GM18951 (cell line): ENCODE measurements at regions of chr4 and their contacts with region 1.

Region 1: DNA sequence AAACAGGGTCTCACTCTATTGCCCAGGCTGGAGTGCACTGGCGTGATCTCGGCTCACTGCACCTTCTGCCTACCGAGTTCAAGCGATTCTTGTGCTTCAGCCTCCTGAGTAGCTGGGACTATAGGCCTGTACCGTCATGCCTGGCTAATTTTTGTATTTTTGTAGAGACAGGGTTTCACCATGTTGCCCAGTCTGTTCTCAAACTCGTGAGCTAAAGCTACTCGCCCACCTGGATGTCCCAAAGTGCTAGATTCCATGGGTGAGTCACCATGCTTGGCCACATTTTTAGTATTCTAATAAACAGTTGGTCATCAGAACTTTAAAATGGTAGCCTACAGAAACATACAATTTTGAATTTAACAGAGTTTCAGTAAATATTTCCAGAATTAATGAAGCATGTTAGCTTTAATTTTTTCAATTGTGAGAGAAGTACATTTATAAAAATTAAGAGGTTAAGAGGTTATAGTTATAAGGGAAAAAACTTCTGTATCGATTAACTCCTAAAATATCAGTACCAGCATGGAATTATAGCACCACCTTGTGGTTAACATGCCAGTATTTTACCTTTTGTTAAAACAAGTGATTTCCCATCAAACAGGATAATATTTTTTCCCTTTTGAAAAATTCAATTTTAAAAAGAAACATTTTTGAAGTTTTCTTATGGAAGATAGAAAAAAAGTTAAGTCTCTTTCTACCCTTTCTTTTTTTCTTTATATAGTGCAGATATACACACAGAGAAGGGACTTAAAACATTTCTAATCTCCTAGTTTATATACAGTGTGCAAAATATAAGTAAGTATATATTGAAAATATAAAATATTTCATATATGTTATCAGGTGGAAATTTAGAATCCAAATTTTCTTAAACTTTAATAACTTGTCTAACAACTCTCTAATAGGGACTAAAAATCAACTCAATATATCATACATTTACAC is 35.4 kb downstream of the CEP44 start:
- POLR2A ChIP-seq: no peak

Region 2: GRCh38 chr4:174217273-174218126 is 101.6 kb before region 1 on chr4:
- in situ Hi-C with region 1: loop called (anchors 10 kb)
- POLR2A ChIP-seq: no peak

Region 3: DNA sequence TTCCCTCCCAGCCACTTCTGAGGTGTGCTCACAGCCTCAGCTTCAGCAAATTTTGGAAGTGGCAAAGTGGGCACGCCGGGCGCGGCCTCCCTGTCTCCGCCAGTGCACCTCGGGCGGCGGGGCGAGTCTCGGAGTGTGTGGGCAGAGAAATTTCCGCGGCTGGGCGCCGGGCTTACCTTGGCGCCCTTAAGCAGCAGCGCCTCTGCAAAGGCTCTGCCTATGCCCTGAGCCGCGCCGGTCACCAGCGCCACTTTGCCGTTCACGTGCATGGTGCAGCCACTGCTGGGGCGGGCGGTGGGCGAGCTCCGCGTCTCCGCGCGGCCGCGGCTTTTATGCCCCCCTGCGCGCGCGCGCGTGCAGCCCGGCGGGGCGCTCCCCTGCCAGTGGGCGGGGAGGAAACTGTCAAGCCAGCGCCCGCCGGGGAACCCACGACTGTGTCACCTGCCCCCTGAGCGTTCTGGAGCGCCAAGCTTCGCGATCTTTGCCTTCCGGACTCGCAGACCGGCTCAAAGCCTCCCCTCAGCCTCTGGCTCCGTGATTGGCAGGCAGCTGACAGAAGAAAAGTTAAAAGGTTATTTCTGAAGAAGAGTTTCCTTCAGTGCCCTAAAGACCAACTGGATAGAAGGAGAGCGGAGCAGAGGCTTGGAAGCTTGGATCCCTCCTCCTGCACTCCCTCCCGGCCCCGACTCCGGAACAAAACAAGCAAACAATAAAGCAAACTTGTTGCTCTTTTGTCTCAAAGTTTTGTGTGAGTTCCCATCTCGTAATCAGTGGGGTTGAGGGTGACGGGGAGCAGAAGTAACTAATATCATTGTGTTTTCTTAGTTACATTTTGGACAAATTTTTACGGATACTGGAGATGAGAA is 203.3 kb after region 1 on chr4 and contains the start of gene HPGD:
- in situ Hi-C with region 1: no loop called
- POLR2A ChIP-seq: no peak